Activated naive CD4-positive, alpha-beta T cell treated with anti-CD3 and anti-CD28 coated beads for 36 hours (primary cell): ENCODE measurements at regions of chr2 and their contacts with region 1.

Region 1: DNA sequence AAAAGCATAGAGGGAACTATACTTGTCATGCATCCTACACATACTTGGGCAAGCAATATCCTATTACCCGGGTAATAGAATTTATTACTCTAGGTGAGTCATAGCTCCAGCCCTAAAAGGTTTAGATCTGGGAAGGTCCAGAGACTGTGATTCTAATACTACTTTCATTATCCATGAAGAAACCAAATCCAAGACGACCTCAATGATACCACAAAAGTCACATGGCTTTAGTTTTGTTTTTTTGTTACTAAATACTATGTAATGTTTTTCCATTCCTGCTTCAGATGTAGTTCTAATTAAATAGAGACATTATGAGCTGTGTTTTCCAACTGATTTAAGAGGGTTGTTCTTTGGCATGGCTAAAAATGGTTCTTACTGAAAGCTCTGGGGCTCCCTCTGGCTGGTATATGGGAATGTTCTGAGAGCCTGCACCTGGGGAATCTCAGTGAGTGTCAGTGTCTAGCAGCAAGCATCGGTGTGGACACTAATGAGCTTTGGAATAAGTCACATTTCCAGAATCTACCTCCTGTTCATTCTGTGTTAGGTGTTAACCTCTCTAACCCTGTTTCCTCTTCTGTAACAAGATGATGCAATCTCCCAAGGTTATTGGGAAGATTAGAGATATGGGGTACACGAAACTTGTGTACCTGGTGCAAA is 20.5 kb upstream of the IL1RL2 start:
- DNase-seq: peak; percentile 57
- H3K4me3 Mint-ChIP-seq: no peak overlapping the region
- H3K27ac Mint-ChIP-seq: no peak overlapping the region
- H3K4me1 Mint-ChIP-seq: peaks cover 9% of the 10 kb centered on the region
- H3K27me3 Mint-ChIP-seq: no peaks in the 10 kb centered on the region

Region 2: GRCh38 chr2:102005989-102006885 is 160.1 kb before region 1 on chr2:
- CTCF ChIA-PET with region 1: interaction called, 8 read pairs
- intact Hi-C with region 1: loop called (anchors 5 kb)
- DNase-seq: peak; percentile 68
- H3K4me3 Mint-ChIP-seq: no peak overlapping the region
- H3K27ac Mint-ChIP-seq: no peak overlapping the region
- H3K4me1 Mint-ChIP-seq: peaks cover 19% of the 10 kb centered on the region
- H3K27me3 Mint-ChIP-seq: no peaks in the 10 kb centered on the region